ENCODE measurements at regions of chr1 and their contacts with region 1.

Region 1: GRCh38 chr1:112188611-112189010 is 199.1 kb upstream of the KCND3 start:
- DNase-seq: no peak
- ATAC-seq: no peak
- H3K4me3 ChIP-seq: no peak overlapping the region
- H3K27ac ChIP-seq: no peak overlapping the region
- H3K4me1 ChIP-seq: no peaks in the 10 kb centered on the region
- H3K27me3 ChIP-seq: no peaks in the 10 kb centered on the region; a peak in 1 of 5 replicates
- CTCF ChIP-seq: no peak
- EP300 ChIP-seq: no peak
- POLR2A ChIP-seq: no peak
- RAD21 ChIP-seq: no peak

Region 2: GRCh38 chr1:112126598-112126997 is 62.0 kb before region 1 on chr1:
- CTCF ChIA-PET with region 1: no interaction called
- POLR2A ChIA-PET with region 1: no interaction called
- in situ Hi-C with region 1: loop called (anchors 10 kb)
- intact Hi-C with region 1: no loop called
- DNase-seq: no peak
- ATAC-seq: no peak
- H3K4me3 ChIP-seq: no peak overlapping the region
- H3K27ac ChIP-seq: no peak overlapping the region
- H3K4me1 ChIP-seq: no peaks in the 10 kb centered on the region
- H3K27me3 ChIP-seq: no peaks in the 10 kb centered on the region
- CTCF ChIP-seq: no peak
- EP300 ChIP-seq: no peak
- POLR2A ChIP-seq: no peak
- RAD21 ChIP-seq: no peak